Activated naive CD4-positive, alpha-beta T cell treated with anti-CD3 and anti-CD28 coated beads for 36 hours (primary cell): ENCODE measurements at regions of chrX and their contacts with region 1.

Region 1: GRCh38 chrX:130165703-130166502 is at the start of gene AIFM1:
- DNase-seq: peak; percentile 90
- H3K4me3 Mint-ChIP-seq: peak within 1 kb of the TSS; percentile 93
- H3K27ac Mint-ChIP-seq: peak within 1 kb of the TSS; percentile 92
- H3K4me1 Mint-ChIP-seq: peaks cover 35% of the 10 kb centered on the region
- H3K27me3 Mint-ChIP-seq: no peaks in the 10 kb centered on the region
- total RNA-seq, gene AIFM1: 59.4 to 63.1 TPM

Region 2: DNA sequence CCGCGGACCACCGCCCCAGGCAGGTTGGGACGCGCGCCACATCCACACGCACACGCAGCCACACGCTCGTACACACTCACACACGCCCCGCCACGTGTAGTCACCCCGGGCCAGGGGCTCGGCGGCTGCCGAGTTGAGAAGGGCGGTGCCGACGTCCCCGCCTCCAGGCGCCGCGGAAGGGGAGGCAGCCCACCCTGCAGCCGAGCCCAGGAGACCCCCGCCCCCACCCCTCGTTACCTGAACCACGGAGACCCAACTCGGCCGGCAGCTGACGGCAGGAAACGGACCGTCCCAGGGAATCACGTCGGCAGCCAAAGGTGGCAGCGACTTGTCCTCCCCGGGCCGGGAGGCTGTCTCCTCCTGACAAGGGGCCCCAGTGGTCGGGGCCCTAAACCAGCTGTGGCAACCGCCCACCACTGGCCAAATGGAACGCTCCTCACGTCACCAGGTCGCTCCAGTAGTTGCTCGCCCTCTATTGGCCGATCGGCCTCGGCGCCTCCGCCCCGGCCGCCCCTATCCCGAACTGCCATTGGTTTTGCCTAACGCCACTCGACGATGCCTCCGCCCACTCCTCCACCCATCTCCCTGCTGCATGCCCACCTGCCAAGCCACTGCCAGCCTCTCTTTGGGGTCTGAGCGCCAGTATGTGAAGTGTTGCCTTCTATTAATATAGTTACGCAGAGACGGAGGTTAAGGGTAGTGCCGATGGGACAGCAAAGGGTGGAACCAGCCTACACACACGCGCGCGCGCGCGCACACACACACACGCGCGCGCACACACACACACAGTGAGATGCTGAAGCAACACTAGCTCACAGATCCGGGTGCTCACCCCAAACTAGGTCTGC is 322.2 kb before region 1 on chrX and contains the start of gene ZDHHC9:
- CTCF ChIA-PET with region 1: no interaction called
- intact Hi-C with region 1: loop called (anchors 10 kb)
- DNase-seq: peak; percentile 89
- H3K4me3 Mint-ChIP-seq: peak within 1 kb of the TSS; percentile 88
- H3K27ac Mint-ChIP-seq: peak within 1 kb of the TSS; percentile 70
- H3K4me1 Mint-ChIP-seq: peaks cover 38% of the 10 kb centered on the region
- H3K27me3 Mint-ChIP-seq: no peaks in the 10 kb centered on the region
- total RNA-seq, gene ZDHHC9: 7.1 TPM

Region 3: DNA sequence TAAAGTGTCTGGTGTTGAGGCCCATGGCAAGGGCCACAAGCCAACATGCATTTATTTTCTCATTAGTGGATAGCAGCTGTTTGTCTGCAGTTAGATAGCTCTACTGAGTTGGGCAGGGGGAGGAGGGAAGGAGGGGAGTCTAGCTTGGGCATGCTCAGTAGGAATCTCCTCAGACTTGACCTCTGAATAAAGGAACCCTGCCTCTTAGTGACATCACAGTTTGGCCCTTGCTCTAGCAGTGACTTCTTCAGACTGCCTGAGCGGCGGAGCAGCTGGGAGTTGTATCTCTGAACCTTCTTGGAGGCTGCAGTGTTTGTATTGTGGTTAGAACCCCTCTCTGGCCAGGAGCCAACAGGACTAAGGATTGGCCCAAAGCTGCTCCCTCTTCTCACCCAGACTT is 126.1 kb before region 1 on chrX:
- CTCF ChIA-PET with region 1: no interaction called
- intact Hi-C with region 1: no loop called
- DNase-seq: no peak
- H3K4me3 Mint-ChIP-seq: no peak overlapping the region
- H3K27ac Mint-ChIP-seq: no peak overlapping the region
- H3K4me1 Mint-ChIP-seq: no peaks in the 10 kb centered on the region
- H3K27me3 Mint-ChIP-seq: no peaks in the 10 kb centered on the region

Region 4: DNA sequence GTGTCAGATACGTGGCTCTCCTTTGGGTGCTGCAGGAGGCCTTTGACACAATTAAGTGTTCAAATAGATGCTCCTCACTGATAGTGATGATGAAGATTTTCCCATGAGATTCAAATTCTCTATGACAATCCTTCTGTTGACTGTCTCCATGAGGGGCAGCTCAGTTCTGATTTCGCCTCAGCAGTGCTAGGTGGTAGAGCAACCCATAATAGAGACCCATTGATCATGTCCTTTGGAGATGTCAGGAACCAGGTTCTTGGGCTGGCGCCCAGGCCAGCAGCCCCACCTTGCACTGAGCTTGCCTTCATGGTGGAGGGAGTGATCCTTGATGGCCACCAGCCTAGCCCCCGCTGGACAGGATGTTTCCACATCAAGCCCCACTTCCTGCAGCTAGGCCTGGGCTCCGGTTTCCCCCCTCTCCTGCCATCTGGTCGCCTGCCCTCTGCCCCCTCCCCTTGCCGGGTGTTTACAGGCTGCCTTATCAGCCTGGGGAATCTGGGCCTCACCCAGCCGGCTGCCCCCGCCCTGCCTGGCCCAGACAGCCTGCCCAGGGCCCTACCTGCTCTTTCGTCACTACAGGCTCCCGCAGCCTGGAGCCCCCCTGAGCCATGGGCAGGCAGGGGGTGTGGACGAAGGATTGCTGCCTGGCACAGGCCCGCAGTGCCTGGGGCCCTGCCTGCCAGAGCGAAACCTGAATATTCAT is 68.2 kb before region 1 on chrX:
- CTCF ChIA-PET with region 1: no interaction called
- intact Hi-C with region 1: no loop called
- DNase-seq: peak; percentile 11
- H3K4me3 Mint-ChIP-seq: no peak overlapping the region
- H3K27ac Mint-ChIP-seq: peak overlapping the region; percentile 54
- H3K4me1 Mint-ChIP-seq: peaks cover 66% of the 10 kb centered on the region
- H3K27me3 Mint-ChIP-seq: no peaks in the 10 kb centered on the region

Region 5: DNA sequence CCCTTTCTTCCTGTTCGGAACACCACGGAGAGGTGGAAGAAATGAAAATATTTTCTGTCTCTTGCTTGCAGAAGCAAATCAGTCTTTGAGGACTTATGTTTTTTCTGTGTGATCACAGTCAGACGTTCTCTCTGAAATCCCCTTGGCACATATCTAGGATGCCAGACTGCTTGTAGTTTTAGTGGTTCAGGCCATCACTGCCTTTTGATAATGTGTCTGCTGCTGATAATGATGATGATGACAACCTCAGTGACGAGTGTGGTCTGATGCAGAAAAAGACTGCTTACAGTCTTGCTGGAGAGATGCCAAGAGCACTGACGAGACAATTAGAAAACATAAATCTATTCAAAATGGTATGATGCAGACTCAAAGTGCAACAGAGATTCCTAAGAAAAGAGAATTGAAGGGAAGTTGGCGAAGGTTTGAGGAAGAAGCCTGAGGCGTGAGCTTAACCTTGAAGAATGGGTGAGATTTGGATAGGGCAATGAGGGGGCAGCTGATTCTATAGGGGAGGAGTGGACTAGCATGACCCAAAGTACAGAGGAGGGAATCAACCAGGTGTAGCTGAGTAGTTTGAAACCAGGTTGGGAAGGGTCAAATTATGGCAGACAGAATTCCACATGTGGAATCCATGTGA is 13.8 kb after region 1 on chrX:
- CTCF ChIA-PET with region 1: no interaction called
- intact Hi-C with region 1: loop called (anchors 2 kb)
- DNase-seq: peak; percentile 21
- H3K4me3 Mint-ChIP-seq: no peak overlapping the region
- H3K27ac Mint-ChIP-seq: peak overlapping the region; percentile 46
- H3K4me1 Mint-ChIP-seq: peaks cover 56% of the 10 kb centered on the region
- H3K27me3 Mint-ChIP-seq: no peaks in the 10 kb centered on the region

Region 6: GRCh38 chrX:130196466-130196865 is 30.6 kb after region 1 on chrX:
- CTCF ChIA-PET with region 1: interaction called, 3 read pairs
- intact Hi-C with region 1: loop called (anchors 2 kb)
- DNase-seq: no peak
- H3K4me3 Mint-ChIP-seq: no peak overlapping the region
- H3K27ac Mint-ChIP-seq: no peak overlapping the region
- H3K4me1 Mint-ChIP-seq: no peaks in the 10 kb centered on the region
- H3K27me3 Mint-ChIP-seq: no peaks in the 10 kb centered on the region

Region 7: GRCh38 chrX:130339408-130340222 is 173.7 kb after region 1 on chrX and contains the start of gene SLC25A14:
- CTCF ChIA-PET with region 1: no interaction called
- intact Hi-C with region 1: loop called (anchors 5 kb)
- DNase-seq: peak; percentile 82
- H3K4me3 Mint-ChIP-seq: peak within 1 kb of the TSS; percentile 86
- H3K27ac Mint-ChIP-seq: peak within 1 kb of the TSS; percentile 89
- H3K4me1 Mint-ChIP-seq: peaks cover 13% of the 10 kb centered on the region
- H3K27me3 Mint-ChIP-seq: no peaks in the 10 kb centered on the region
- total RNA-seq, gene SLC25A14: 7.4 to 9.0 TPM

Region 8: GRCh38 chrX:130435937-130436336 is 270.0 kb after region 1 on chrX:
- CTCF ChIA-PET with region 1: no interaction called
- intact Hi-C with region 1: no loop called
- DNase-seq: no peak
- H3K4me3 Mint-ChIP-seq: no peak overlapping the region
- H3K27ac Mint-ChIP-seq: no peak overlapping the region
- H3K4me1 Mint-ChIP-seq: no peaks in the 10 kb centered on the region
- H3K27me3 Mint-ChIP-seq: no peaks in the 10 kb centered on the region

Region 9: DNA sequence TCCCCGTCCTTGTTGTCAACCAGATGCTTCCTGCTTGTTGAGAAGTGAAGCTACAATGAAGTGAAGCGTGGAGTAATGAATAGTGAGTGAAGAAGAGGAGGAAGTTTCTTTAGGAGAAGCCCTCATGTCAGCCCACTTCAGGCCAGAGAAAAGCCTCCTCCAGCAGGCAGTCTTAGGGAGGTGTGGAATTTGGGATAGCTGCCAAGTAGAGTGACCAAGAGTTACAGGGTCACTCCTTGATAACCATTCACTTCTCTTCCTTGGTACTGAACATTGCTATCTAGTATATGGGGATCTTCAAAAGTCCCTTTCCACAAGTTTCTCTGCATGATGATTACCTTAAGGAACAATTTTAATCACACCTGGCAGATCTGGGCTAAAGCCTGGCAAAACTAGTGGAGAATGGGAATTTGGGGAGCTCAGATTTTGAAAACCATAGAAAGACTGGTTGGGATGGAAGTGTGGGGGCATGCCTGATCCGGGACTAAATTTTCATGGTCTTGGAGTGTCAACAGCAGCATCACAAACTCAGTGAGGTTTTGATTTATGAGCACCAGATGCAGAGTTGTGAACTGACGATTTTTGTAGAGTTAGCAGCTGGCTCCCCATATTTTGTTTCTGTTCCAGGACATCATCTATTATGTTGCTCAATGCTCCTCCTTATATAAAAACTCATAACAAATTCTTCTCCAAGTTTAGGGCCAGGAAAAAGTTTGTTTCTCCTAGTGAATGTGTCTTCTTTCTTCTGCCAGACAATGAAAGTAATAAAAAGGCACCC is 1070.1 kb after region 1 on chrX:
- CTCF ChIA-PET with region 1: no interaction called
- intact Hi-C with region 1: no loop called
- DNase-seq: no peak
- H3K4me3 Mint-ChIP-seq: no peak overlapping the region
- H3K27ac Mint-ChIP-seq: no peak overlapping the region
- H3K4me1 Mint-ChIP-seq: no peaks in the 10 kb centered on the region
- H3K27me3 Mint-ChIP-seq: peaks cover 2% of the 10 kb centered on the region